Common myeloid progenitor, CD34-positive (primary cell): ENCODE measurements at regions of chr18 and their contacts with region 1.

Region 1: DNA sequence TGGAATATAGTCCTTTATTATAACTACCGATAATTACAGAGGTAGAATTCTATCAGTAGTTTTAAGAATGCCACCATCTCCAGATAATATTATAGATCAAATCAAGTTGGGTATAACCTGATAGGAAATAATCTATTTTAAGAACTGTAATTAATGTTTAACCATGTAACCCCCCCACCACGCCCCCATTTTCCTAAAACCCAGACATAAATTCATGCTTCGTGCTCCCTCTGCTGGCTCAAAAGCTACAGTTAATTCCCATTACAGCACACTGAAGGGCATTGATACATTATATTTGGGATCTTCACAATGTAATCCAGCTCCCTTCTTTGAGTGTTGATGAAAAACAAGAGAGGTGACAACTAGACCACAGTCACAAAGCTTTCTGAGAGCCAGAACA is 228.0 kb upstream of the SMAD7 start:
- DNase-seq: peak in 2 of 3 donors; percentile 27 to 37
- H3K4me3 ChIP-seq: no peak overlapping the region
- H3K27ac ChIP-seq: no peak overlapping the region
- H3K4me1 ChIP-seq: peaks cover 12 to 24% (median 15%) of the 10 kb centered on the region in 4 experiments
- H3K27me3 ChIP-seq: no peaks in the 10 kb centered on the region

Region 2: DNA sequence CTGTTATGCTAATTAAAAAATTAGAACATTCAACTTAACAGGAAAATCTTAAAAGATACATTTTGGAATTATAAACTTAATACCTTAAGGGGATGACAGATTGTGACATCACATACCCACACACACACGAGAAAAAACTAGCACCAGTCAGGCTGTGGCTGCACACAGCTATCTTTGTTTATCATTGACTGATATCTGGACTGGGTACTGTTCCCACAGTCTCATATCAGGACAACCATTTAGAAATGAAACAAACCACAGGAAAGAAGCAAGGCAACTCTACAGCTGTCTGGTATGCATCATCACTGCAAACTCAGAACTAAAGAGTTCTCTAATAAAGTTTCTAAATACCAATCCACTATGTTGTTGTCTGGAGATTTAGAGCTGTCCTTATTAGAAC is 17.1 kb before region 1 on chr18:
- CTCF ChIA-PET with region 1: interaction called, 11 read pairs
- POLR2A ChIA-PET with region 1: no interaction called
- DNase-seq: peak; percentile 63 to 92 (median 85)
- H3K4me3 ChIP-seq: no peak overlapping the region
- H3K27ac ChIP-seq: no peak overlapping the region
- H3K4me1 ChIP-seq: peaks cover 16 to 35% (median 20%) of the 10 kb centered on the region in 4 experiments
- H3K27me3 ChIP-seq: no peaks in the 10 kb centered on the region

Region 3: DNA sequence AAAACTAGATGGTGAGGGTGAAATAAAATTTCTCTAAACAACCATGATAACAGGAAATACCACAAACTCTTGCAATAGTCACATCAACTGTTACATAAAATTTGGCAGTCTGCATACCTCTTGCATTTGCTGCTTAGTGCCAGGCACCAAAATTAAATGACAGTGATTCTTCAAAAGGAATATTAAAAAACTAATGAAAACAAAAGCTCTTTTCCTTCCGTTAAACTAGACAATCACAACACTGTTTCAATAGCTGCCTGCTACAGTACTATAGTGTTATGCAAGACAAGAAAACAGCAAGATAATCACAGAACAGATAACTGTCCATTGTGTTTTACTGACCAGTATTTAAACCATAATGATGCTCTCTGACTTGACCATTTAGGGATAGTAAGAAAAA is 11.0 kb after region 1 on chr18:
- CTCF ChIA-PET with region 1: interaction called, 16 read pairs
- POLR2A ChIA-PET with region 1: no interaction called
- DNase-seq: no peak
- H3K4me3 ChIP-seq: no peak overlapping the region
- H3K27ac ChIP-seq: no peak overlapping the region
- H3K4me1 ChIP-seq: peaks cover 0 to 4% (median 0%) of the 10 kb centered on the region in 4 experiments
- H3K27me3 ChIP-seq: no peaks in the 10 kb centered on the region